Transverse colon (tissue), 4 donors: ENCODE measurements at regions of chr10 and their contacts with region 1.

Region 1: GRCh38 chr10:7410862-7411670 is at the start of gene SFMBT2:
- DNase-seq: peak; percentile 59
- H3K4me3 ChIP-seq: peak within 1 kb of the TSS; percentile 21 to 66 (median 56)
- H3K27ac ChIP-seq: peak within 1 kb of the TSS; percentile 73 to 79 (median 74)
- H3K4me1 ChIP-seq: peaks cover 5 to 38% (median 28%) of the 10 kb centered on the region in 4 donors
- H3K27me3 ChIP-seq: peaks cover 76% of the 10 kb centered on the region
- CTCF ChIP-seq: peak in 1 of 5 experiments; percentile 6
- EP300 ChIP-seq: no peak
- POLR2A ChIP-seq: no peak
- total RNA-seq, gene SFMBT2: 0.60 to 8.6 (median 2.5) TPM

Region 2: GRCh38 chr10:6667679-6668270 is 743.3 kb before region 1 on chr10:
- in situ Hi-C with region 1: loop called in 2 of 4 experiments (anchors 25 kb)
- intact Hi-C with region 1: no loop called
- DNase-seq: peak; percentile 9
- H3K4me3 ChIP-seq: no peak overlapping the region
- H3K27ac ChIP-seq: no peak overlapping the region
- H3K4me1 ChIP-seq: no peaks in the 10 kb centered on the region
- H3K27me3 ChIP-seq: peaks cover 13% of the 10 kb centered on the region
- CTCF ChIP-seq: peak; percentile 15 to 34 (median 18)
- EP300 ChIP-seq: no peak
- POLR2A ChIP-seq: no peak

Region 3: DNA sequence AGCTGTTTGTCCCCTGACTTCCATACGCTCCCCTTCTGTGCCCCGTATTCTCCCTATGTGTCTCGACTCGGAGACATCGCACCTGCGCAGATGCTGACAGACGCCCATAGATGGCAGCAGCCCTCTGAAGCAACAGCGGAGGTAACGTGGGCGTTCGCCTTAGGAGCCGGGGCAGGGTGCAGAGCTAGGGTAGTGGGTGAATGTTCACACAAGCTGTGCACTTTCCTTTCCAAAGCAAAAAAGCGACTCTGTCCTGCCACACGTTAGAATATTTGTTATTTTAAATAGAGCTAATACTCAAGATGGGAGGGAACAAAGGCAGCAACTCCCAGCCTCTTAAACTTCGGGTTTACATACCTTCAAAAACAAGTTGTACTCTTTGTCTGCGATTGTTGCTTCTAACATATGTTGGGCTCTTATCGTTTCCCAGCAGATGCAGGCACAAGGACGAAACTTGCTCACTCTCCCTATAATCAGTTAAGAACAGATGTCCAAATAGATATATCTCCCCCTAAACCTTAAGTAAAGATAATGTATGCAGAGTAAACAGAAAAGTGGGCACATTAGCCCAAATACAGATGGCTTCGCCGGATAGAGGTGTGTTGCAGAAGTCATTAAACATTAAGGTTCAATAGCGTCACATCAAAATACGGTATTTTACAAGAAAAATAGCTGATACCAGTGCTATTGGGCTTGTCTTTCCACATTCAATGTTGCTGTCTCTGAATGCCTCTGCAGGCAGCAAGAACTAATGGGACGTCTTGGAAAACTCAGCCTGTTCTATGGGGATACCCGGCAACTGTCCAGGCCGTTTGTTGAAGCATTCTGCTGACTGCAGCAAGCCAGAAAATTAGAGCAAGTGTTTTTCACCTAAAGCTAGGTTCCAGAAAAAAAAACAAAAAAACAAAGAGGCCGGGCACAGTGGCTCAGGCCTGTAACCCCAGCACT is 490.7 kb before region 1 on chr10:
- in situ Hi-C with region 1: loop called (anchors 10 to 25 kb)
- intact Hi-C with region 1: loop called (anchors 10 kb)
- DNase-seq: peak; percentile 77
- H3K4me3 ChIP-seq: no peak overlapping the region
- H3K27ac ChIP-seq: no peak overlapping the region
- H3K4me1 ChIP-seq: peaks cover 0 to 7% (median 2%) of the 10 kb centered on the region in 4 donors
- H3K27me3 ChIP-seq: no peaks in the 10 kb centered on the region
- CTCF ChIP-seq: peak; percentile 33 to 56 (median 43)
- EP300 ChIP-seq: no peak
- POLR2A ChIP-seq: no peak

Region 4: DNA sequence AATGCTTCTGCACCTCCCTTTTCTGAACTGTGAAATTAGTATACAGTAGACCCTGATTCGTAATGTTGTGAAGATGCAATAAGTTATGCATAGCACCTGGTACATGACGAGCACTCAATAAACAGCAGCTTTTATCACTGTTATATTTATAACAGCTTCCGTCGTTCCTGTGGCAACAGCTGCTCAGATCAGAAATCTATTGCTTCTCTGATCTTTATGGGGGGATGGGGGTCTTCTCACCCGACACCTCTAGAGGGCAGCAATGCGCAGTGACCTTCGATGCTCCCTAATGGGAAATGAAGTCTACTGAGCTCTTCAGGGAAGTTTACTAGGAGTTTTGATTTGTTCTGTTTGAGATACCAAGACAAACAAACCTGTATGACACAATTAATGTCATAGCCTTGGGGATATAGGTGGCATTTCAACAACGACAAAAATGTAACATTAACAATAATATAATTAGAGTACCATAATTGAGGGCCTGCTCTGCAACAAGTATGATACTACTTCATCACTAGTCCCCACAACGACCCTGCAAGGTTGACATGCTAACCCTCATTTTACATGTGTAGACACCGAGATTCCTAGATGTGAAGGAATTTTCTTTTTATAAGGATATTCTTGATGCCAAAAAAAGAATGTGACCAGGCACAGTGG is 289.8 kb before region 1 on chr10:
- in situ Hi-C with region 1: loop called in 2 of 4 experiments (anchors 10 to 25 kb)
- intact Hi-C with region 1: no loop called
- DNase-seq: peak; percentile 45
- H3K4me3 ChIP-seq: no peak overlapping the region
- H3K27ac ChIP-seq: no peak overlapping the region
- H3K4me1 ChIP-seq: no peaks in the 10 kb centered on the region
- H3K27me3 ChIP-seq: no peaks in the 10 kb centered on the region
- CTCF ChIP-seq: peak; percentile 28 to 45 (median 37)
- EP300 ChIP-seq: no peak
- POLR2A ChIP-seq: no peak

Region 5: GRCh38 chr10:7260412-7260900 is 150.6 kb before region 1 on chr10:
- in situ Hi-C with region 1: loop called in 3 of 4 experiments (anchors 10 kb)
- intact Hi-C with region 1: loop called (anchors 5 kb)
- DNase-seq: peak; percentile 44
- H3K4me3 ChIP-seq: no peak overlapping the region
- H3K27ac ChIP-seq: peak overlapping the region in 3 of 4 donors; percentile 41 to 59 (median 45)
- H3K4me1 ChIP-seq: peaks cover 0 to 9% (median 9%) of the 10 kb centered on the region in 4 donors
- H3K27me3 ChIP-seq: no peaks in the 10 kb centered on the region
- CTCF ChIP-seq: peak; percentile 55 to 72 (median 62)
- EP300 ChIP-seq: no peak
- POLR2A ChIP-seq: no peak